Right ventricle myocardium superior (tissue), 1 donor: ENCODE measurements at regions of chr12 and their contacts with region 1.

Region 1: GRCh38 chr12:123533672-123534643 is at the start of gene RILPL1:
- DNase-seq: peak; percentile 74
- ATAC-seq: peak; percentile 71
- total RNA-seq, gene RILPL1: 92.4 TPM

Region 2: GRCh38 chr12:123388177-123388947 is 145.6 kb before region 1 on chr12:
- intact Hi-C with region 1: loop called (anchors 10 kb)
- DNase-seq: peak; percentile 85
- ATAC-seq: peak; percentile 68

Region 3: DNA sequence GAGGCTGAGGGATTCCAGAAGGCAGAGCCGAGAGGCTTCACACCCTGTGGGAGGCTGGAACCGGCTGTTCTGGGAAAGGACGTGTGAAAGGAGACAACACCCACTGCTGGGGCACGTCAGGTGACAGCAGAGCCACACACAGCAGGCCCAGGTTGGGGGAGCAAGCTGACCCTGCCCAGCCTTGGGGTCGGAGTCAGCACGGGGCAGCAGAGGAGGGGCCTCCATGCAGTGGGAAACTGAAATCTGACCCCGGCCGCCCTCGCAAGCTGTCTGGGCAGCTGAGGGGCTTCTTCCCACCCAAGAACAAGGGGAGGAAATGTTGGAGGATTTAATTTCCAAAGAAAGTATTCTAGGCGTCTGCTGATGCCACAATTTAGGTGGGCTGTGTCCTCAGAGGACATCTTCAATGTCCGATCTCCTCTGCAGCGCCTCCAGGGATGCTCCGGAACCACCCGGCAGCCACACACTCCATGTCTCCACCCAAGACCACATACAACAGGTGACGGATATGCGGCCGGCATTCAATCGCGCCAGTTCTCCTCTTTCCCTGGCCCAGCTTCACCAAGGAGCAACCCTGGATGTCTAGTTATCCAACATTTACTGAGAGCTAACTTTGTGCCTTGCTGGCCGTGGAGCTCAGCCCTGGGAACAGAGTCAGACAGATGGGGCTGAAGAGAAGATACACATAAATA is 45.3 kb before region 1 on chr12:
- intact Hi-C with region 1: loop called (anchors 5 kb)
- DNase-seq: no peak
- ATAC-seq: peak; percentile 2

Region 4: GRCh38 chr12:123580772-123581171 is 46.8 kb after region 1 on chr12:
- intact Hi-C with region 1: loop called (anchors 5 kb)
- DNase-seq: no peak
- ATAC-seq: no peak